A673 (cell line): ENCODE measurements at regions of chrX and their contacts with region 1.

Region 1: DNA sequence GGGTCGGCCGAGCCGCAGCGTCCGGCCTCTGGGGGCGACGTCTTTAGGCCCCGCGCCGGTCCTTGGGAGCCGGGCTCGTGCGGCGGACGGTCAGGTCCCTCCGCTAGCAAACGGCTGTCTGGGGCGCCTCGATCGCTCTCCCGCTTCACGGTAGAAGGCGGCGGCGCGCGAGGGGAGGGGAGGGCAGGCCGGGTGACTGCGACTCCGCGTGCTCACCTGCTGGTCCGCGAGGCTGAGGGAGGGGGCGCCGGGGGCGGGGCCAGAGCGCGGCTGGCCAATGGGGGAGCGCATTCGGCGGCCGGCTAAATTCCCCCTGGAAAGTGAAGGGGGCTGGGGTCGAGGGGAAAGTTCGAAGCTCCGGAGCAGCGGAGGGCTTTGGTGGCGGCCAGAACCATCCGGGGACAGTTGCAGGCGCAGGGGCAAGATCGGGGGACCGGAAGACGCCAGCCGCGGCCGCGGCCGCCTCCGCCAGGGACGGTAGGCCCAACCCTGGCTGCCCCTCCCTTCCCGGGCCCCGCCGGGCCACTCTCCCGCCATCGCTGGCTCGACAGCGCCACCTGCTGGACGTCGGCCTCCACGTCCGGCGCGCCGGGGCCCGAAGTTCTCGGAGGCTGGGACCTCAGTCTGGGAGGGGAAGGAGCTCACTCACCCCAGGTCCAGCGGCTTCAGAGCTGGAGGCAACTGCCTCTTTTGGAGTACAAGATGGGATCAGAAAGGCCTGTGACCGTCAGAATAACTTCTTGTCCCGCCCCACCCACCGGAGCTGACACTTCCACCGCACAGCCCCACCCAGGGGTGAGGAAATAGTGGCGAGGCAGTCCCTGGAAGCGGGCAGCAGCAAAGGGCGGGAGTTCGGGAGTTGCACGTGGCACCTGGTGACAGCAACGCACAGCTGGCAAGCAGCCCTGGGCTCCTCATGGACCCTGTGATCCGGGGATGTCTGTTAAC is 49.9 kb downstream of the ELF4 start:
- DNase-seq: peak; percentile 81
- H3K4me3 ChIP-seq: peak overlapping the region; percentile 46
- H3K27ac ChIP-seq: peak overlapping the region; percentile 54
- H3K4me1 ChIP-seq: peaks cover 4% of the 10 kb centered on the region
- H3K27me3 ChIP-seq: no peaks in the 10 kb centered on the region
- CTCF ChIP-seq: peak; percentile 79

Region 2: GRCh38 chrX:129925305-129926092 is 134.9 kb before region 1 on chrX:
- CTCF ChIA-PET with region 1: interaction called, 12 read pairs
- POLR2A ChIA-PET with region 1: no interaction called
- intact Hi-C with region 1: loop called (anchors 2 kb)
- DNase-seq: peak; percentile 77
- H3K4me3 ChIP-seq: no peak overlapping the region
- H3K27ac ChIP-seq: no peak overlapping the region
- H3K4me1 ChIP-seq: no peaks in the 10 kb centered on the region
- H3K27me3 ChIP-seq: no peaks in the 10 kb centered on the region
- CTCF ChIP-seq: peak; percentile 77

Region 3: GRCh38 chrX:130024127-130024526 is 36.3 kb before region 1 on chrX:
- CTCF ChIA-PET with region 1: interaction called, 11 read pairs
- POLR2A ChIA-PET with region 1: no interaction called
- intact Hi-C with region 1: no loop called
- DNase-seq: peak; percentile 73
- H3K4me3 ChIP-seq: no peak overlapping the region
- H3K27ac ChIP-seq: no peak overlapping the region
- H3K4me1 ChIP-seq: no peaks in the 10 kb centered on the region
- H3K27me3 ChIP-seq: no peaks in the 10 kb centered on the region
- CTCF ChIP-seq: no peak

Region 4: GRCh38 chrX:130268500-130269170 is 208.2 kb after region 1 on chrX and contains the start of gene ZNF280C:
- CTCF ChIA-PET with region 1: no interaction called
- POLR2A ChIA-PET with region 1: no interaction called
- intact Hi-C with region 1: no loop called
- DNase-seq: peak; percentile 95
- H3K4me3 ChIP-seq: peak within 1 kb of the TSS; percentile 77
- H3K27ac ChIP-seq: peak within 1 kb of the TSS; percentile 90
- H3K4me1 ChIP-seq: no peaks in the 10 kb centered on the region
- H3K27me3 ChIP-seq: no peaks in the 10 kb centered on the region
- CTCF ChIP-seq: peak; percentile 42; the same call in 1 of the 2 replicates
- total RNA-seq, gene ZNF280C: 16.8 and 22.0 TPM in 2 replicates

Region 5: DNA sequence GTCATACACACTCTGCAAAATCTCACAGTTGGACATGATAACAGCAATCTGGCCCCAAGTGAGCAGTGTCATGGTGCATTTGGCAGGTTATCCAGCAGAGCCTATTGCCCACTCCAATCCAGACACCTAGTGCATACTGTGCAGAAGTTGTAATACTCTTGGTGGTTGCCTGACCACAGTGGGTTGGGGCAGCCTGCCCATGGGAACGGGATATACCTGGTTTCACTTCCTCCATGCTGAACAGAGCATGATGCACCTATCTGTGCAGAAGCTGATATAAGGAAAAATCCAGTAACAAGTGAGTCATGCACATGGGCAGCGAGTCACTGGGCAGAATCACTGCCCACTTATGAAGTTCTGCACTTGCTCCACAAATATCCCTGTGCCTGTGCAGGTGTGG is 1334.0 kb after region 1 on chrX:
- CTCF ChIA-PET with region 1: no interaction called
- POLR2A ChIA-PET with region 1: no interaction called
- intact Hi-C with region 1: no loop called
- DNase-seq: no peak
- H3K4me3 ChIP-seq: no peak overlapping the region
- H3K27ac ChIP-seq: no peak overlapping the region
- H3K4me1 ChIP-seq: no peaks in the 10 kb centered on the region
- H3K27me3 ChIP-seq: peaks cover 16% of the 10 kb centered on the region
- CTCF ChIP-seq: no peak